Motor neuron (in vitro differentiated cells): ENCODE measurements at regions of chr5 and their contacts with region 1.

Region 1: DNA sequence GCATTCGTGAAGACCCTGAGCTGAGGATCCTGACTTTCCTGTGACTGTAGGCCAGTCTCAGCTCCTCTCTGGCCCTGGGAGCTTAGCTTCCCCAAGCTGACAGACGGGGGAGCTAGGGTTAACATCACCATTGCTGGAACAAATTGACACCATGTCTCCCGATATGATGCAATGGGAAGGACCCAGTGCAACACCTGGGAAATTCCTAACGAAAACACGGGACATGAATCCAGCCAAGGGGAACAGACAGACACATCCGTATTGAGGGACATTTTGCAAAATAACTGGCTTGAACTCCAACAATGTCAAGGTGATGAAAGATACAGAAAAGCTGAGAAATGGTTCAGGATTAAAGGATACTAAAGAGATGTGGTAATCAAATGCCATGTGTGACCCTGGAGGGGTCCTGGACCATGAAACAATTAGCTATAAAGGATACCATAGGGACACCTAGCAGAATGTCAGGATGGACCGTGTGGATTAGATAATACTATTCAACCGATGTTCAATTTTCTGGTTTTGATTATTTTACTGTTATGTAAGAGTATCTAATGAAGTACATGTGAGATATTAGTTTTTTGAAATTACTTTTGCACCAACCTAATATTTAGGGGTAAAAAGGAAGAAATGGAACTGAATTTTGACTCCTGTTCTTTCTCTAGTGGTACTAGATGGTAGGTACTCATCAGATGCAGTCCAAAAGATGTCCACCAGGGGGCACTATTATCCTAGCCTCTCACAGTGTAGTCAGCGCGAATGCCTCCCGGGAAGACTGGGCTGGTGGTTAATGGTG is 52.7 kb downstream of the NDST1 start:
- ATAC-seq: peak; percentile 53 to 97 (median 90)
- H3K4me3 ChIP-seq: no peak overlapping the region
- H3K27ac ChIP-seq: no peak overlapping the region
- H3K4me1 ChIP-seq: peaks cover 12% of the 10 kb centered on the region in 2 donors

Region 2: DNA sequence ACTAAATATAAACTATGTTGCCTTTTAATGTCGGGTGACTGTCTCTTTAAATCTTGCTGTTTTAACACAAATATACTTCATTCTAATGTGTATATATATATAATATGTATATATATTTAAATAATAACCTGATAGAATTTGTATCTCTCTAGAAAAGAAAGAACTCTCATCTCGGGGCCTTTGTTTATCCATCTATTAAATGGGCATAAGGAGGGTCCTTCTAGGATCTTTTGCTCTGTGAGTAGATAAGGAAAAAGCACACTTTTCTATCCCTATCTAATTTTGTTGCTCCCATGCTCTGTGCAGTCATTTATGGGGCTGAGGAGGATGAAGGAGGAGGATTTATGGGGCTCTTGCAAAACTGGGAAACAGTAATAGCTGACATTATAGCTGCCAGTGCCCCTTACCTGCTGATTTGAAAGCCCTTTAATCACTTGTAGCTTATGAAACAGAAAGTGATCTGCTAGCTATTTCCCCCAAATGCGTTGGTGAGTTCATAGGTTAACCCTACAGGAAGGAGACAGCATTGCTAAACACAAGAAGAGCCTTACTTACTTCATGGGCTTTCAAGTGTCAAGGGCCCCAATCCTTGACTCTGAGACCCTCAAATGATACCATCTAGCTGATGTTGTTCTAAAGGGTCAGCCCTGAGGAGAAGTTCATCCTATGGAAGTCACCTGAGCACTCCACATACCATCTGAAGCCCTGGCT is 836.3 kb before region 1 on chr5:
- in situ Hi-C with region 1: no loop called
- ATAC-seq: no peak
- H3K4me3 ChIP-seq: no peak overlapping the region
- H3K27ac ChIP-seq: no peak overlapping the region
- H3K4me1 ChIP-seq: no peaks in the 10 kb centered on the region

Region 3: DNA sequence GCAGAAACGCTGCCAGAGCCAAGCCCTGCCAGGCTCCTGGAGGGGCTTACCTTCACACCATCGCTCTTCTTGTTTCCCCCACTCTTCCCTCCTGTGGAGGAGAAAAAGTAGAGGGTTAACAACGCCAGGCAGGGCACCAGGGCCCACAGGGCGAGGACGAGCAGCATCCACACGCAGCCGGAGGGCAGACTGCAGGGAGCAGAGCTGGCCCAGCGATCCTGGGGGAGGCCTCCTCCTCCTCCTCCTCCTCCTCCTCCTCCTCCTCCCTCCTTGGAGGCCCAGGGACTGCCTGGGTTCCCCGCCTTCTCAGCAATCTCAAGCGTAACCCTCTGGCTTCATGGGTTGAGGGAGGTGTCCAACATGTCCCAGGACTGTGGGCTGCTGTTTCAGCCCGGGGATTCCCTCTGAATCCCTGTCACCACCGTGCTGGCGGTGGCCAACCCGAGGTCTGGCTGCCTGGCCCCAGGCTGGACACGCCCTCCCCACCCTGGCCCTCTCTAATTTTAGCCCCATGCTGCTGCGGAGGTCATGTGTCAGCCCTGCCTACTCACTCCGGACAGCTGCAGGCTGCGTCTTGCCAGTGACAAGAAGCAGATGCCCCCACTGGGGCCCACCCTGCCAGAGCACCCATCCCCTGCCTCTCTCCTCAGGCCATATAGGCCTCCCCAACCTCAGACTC is 315.3 kb before region 1 on chr5:
- in situ Hi-C with region 1: no loop called
- ATAC-seq: peak; percentile 63 to 96 (median 88)
- H3K4me3 ChIP-seq: no peak overlapping the region
- H3K27ac ChIP-seq: peak overlapping the region in 1 of 2 donors; percentile 30
- H3K4me1 ChIP-seq: peaks cover 13 to 14% of the 10 kb centered on the region in 2 donors

Region 4: DNA sequence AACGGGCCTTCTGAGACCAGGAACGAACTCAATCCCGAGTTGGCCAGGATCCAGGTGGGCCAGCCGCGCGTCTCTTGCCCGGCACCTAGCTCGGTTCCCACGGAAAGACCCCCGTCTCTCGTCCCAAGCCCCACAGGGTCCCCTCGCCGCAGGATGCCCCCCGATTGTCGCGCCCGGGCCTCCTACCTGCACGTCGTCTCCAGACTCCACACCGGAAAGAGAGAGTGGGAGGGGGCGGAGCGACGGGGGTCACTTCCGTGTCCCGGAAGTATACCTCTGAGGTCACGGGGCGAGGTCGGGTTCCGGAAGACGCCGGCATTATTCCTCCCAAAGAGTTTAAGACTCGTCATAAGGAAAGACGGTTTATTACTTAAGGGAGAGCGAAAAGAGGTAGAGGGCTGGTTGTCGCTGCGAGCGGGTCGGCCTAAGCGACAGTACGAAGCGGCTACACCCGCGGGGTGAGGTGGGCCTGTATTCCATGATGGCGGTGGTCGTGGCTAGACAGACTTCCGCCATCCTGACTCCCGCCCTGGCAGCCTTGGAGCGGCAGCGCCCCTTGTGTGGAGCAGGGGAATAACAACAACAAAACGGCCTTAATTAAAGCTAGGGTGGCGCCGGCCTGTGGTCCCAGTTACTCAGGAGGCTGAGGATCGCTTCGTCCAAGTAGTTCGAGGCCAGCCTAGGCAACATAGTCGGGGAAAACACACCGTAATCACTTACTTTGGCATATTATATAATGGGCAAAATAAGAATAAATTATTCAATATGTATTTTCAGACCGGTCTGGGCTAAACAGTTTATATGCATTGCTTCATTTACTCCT is 110.9 kb before region 1 on chr5 and contains the start of gene RPS14:
- in situ Hi-C with region 1: loop called in 1 of 9 experiments (anchors 25 kb)
- ATAC-seq: peak; percentile 94 to 98 (median 96)
- H3K4me3 ChIP-seq: peak within 1 kb of the TSS; percentile 66 to 96 (median 74)
- H3K27ac ChIP-seq: peak within 1 kb of the TSS; percentile 99
- H3K4me1 ChIP-seq: peaks cover 0 to 10% of the 10 kb centered on the region in 2 donors
- total RNA-seq, gene RPS14: 1,897 to 6,053 (median 4,324) TPM

Region 5: DNA sequence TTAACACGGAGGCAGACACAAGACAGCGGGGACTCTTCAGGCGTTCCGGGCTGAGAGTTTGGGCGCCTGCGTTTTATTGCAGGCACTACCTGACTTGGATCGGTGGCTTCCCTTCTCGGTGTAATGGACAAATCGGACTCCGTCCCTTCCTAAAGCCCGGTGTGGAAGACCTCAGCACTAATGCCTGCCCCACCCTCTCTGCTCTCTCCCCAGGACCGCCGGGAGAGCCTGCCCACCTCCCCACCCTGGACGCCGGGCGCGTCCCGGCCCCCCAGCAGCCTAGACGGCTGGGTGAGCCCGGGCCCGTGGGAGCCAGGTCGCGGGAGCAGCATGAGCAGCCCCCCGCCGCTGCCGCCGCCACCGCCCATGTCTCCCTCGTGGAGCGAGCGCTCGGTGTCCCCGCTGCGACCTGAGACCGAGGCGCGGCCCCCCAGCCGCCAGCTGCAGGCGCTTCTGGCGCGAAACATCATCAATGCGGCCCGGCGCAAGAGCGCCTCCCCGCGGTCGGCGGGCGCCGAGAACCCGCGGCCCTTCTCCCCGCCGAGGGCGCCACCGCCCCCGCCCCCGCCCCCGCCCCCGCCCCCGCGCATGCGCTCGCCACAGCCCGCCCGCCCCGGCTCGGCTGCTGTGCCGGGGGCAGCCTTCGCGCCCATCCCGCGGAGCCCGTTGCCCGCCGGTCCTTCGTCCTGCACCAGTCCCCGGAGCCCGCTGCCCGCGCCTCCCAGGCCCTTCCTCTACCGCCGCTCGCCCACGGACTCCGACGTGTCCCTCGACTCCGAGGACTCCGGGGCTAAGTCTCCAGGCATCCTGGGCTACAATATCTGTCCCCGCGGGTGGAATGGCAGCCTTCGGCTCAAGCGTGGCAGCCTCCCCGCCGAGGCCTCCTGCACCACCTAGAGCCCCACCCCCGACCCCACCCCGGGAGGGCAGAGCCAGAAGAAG is 95.9 kb after region 1 on chr5:
- in situ Hi-C with region 1: loop called in 6 of 9 experiments (anchors 5 to 25 kb)
- ATAC-seq: peak; percentile 70 to 93 (median 85)
- H3K4me3 ChIP-seq: peak overlapping the region; percentile 48 to 58 (median 55)
- H3K27ac ChIP-seq: no peak overlapping the region
- H3K4me1 ChIP-seq: peaks cover 11 to 29% of the 10 kb centered on the region in 2 donors

Region 6: GRCh38 chr5:150700594-150701293 is 140.1 kb after region 1 on chr5 and contains the start of gene RBM22:
- in situ Hi-C with region 1: loop called in 1 of 9 experiments (anchors 25 kb)
- ATAC-seq: peak; percentile 92 to 97 (median 96)
- H3K4me3 ChIP-seq: peak within 1 kb of the TSS; percentile 79 to 99 (median 91)
- H3K27ac ChIP-seq: peak within 1 kb of the TSS; percentile 96 to 99
- H3K4me1 ChIP-seq: peaks cover 5 to 13% of the 10 kb centered on the region in 2 donors
- total RNA-seq, gene RBM22: 26.4 to 52.5 (median 42.5) TPM

Region 7: GRCh38 chr5:150801117-150801927 is 240.7 kb after region 1 on chr5:
- in situ Hi-C with region 1: loop called in 1 of 9 experiments (anchors 25 kb)
- ATAC-seq: peak; percentile 28 to 97 (median 82)
- H3K4me3 ChIP-seq: peak overlapping the region; percentile 1 to 33 (median 21)
- H3K27ac ChIP-seq: no peak overlapping the region
- H3K4me1 ChIP-seq: no peaks in the 10 kb centered on the region